CD14-positive monocyte (primary cell): ENCODE measurements at regions of chr3 and their contacts with region 1.

Region 1: GRCh38 chr3:125110016-125110875 is 54.4 kb upstream of the HEG1 start:
- DNase-seq: peak; percentile 30 to 46 (median 38)
- H3K4me3 ChIP-seq: no peak overlapping the region
- H3K4me3 Mint-ChIP-seq: no peak overlapping the region
- H3K27ac ChIP-seq: no peak overlapping the region
- H3K27ac Mint-ChIP-seq: peak overlapping the region in 2 of 7 donors; percentile 0 to 4
- H3K4me1 ChIP-seq: peaks cover 5 to 17% of the 10 kb centered on the region in 2 donors
- H3K4me1 Mint-ChIP-seq: peaks cover 19% of the 10 kb centered on the region
- H3K27me3 ChIP-seq: no peaks in the 10 kb centered on the region
- H3K27me3 Mint-ChIP-seq: peaks cover 2 to 7% (median 4%) of the 10 kb centered on the region in 3 donors
- CTCF ChIP-seq: no peak

Region 2: GRCh38 chr3:125163739-125164601 is 53.7 kb after region 1 on chr3:
- intact Hi-C with region 1: loop called in 1 of 2 experiments (anchors 5 kb)
- DNase-seq: peak; percentile 59 to 77 (median 71)
- H3K4me3 ChIP-seq: peak overlapping the region in 1 of 3 experiments; percentile 58
- H3K4me3 Mint-ChIP-seq: peak overlapping the region; percentile 56 to 72
- H3K27ac ChIP-seq: peak overlapping the region; percentile 29 to 81
- H3K27ac Mint-ChIP-seq: peak overlapping the region; percentile 50 to 89 (median 77)
- H3K4me1 ChIP-seq: peaks cover 50 to 53% of the 10 kb centered on the region in 2 donors
- H3K4me1 Mint-ChIP-seq: peaks cover 58% of the 10 kb centered on the region
- H3K27me3 ChIP-seq: no peaks in the 10 kb centered on the region
- H3K27me3 Mint-ChIP-seq: peaks cover 1 to 6% (median 2%) of the 10 kb centered on the region in 3 donors
- CTCF ChIP-seq: no peak